Activated CD8-positive, alpha-beta memory T cell treated with anti-CD3 and anti-CD28 coated beads, Interleukin-2, amount 10 ng/mL, durations not matched to agents 7 days and 5 days (primary cell): ENCODE measurements at regions of chrX and their contacts with region 1.

Region 1: DNA sequence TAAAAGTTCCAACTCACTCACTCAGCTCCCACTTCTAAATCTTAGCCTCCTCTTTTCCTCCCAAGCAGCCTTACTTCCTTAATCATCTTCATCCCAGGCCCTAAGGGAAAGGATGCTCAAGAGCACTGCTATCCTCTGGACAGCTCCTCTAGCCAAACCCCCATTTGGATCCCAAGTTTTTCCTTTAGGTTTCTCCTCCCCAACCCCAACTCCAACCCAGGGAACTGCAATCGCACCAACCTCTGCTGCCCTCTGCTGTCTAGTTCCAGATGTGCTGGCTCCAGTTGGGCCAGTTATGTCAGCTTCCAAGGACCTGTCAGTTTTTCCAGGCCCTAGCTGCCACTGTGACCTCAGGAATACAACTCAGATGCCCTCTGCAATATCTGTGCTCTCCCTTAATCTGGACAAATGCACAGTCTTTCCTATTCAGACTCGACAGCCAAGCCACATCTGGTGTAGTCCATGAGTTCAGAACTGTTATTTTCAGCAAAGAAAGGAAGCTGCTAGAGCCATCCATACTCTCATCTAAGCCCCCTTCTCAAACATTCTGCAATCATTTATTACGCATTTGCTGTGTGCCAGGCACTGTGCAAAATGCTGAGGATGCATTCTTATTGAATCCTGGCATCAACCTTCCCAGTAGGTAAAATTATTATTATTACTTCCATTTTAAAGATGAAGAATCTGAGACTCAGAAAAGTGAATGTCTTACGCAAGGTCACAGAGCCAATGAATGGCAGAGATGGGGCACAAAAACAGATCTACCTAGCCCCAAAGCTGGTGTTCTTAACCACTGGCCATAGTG is 12.3 kb upstream of the XPNPEP2 start:
- DNase-seq: peak; percentile 52
- ATAC-seq: peak; percentile 66
- H3K4me3 Mint-ChIP-seq: no peak overlapping the region
- H3K27ac Mint-ChIP-seq: no peak overlapping the region
- H3K4me1 Mint-ChIP-seq: peaks cover 24% of the 10 kb centered on the region
- H3K27me3 Mint-ChIP-seq: no peaks in the 10 kb centered on the region

Region 2: DNA sequence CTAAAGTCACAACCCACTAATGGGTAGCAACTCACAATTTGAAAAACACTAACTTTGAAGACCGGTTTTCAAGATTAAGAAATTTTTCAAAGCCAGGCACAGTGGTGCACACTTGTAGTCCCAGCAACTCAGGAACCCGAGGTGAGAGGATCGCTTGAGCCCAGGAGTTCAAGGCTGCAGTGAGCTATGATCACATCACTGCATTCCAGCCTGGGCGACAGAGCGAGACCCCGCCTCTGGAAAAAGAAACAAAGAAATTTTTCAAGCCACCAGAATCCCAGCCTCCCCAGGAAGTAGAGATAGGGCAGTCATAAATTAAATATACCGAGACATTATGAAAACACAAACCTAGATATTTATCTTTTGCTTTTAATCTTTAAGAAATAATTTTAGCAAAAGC is 216.2 kb before region 1 on chrX:
- CTCF ChIA-PET with region 1: no interaction called
- DNase-seq: no peak
- ATAC-seq: no peak
- H3K4me3 Mint-ChIP-seq: no peak overlapping the region
- H3K27ac Mint-ChIP-seq: no peak overlapping the region
- H3K4me1 Mint-ChIP-seq: no peaks in the 10 kb centered on the region
- H3K27me3 Mint-ChIP-seq: no peaks in the 10 kb centered on the region

Region 3: GRCh38 chrX:129606918-129607317 is 119.6 kb before region 1 on chrX:
- CTCF ChIA-PET with region 1: interaction called, 11 read pairs
- DNase-seq: peak; percentile 56
- ATAC-seq: peak; percentile 45
- H3K4me3 Mint-ChIP-seq: no peak overlapping the region
- H3K27ac Mint-ChIP-seq: no peak overlapping the region
- H3K4me1 Mint-ChIP-seq: peaks cover 23% of the 10 kb centered on the region
- H3K27me3 Mint-ChIP-seq: no peaks in the 10 kb centered on the region

Region 4: DNA sequence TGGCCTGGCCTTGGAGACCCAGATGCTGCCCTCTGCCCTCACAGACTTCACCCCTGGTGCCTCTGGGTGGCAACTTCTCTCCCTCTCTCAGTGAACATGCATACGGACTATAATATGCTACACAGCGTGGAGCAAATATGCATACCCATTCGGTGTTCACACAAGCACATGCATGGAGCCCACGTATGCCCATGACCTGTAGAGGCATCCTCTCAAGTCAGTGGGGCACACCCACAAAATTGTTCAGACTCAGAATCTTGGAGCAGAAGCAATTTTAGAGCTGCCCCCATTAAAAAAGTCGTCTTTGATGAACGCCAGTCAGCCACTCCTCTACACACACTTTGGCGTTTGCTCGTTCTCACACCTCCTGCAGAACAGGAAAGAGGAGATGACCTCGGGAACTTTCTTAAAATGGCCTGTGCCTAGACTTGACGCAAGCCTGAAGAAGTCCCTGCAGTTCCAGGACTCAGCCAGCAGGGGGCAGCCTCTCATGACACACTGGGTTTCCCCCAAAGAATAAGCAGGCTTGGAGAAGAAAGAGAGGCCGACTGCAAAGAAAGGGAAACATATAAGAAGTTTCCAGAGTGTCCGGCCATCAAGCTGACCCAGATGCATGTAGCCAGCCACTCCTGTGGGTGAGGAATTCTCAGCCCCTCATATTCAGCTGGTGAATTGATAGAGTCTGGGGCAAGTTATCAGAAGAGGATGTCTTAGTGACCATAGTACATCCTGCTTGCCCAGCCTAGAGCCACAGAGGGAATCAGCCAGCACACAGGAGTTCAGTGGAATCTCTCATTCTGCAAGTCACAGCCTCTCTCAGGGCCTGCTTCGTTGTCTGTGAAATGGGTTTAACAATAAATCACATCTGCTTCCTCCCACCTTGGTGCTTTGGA is 89.0 kb before region 1 on chrX:
- CTCF ChIA-PET with region 1: interaction called, 26 read pairs
- DNase-seq: peak; percentile 77
- ATAC-seq: peak; percentile 83
- H3K4me3 Mint-ChIP-seq: no peak overlapping the region
- H3K27ac Mint-ChIP-seq: no peak overlapping the region
- H3K4me1 Mint-ChIP-seq: peaks cover 10% of the 10 kb centered on the region
- H3K27me3 Mint-ChIP-seq: no peaks in the 10 kb centered on the region

Region 5: DNA sequence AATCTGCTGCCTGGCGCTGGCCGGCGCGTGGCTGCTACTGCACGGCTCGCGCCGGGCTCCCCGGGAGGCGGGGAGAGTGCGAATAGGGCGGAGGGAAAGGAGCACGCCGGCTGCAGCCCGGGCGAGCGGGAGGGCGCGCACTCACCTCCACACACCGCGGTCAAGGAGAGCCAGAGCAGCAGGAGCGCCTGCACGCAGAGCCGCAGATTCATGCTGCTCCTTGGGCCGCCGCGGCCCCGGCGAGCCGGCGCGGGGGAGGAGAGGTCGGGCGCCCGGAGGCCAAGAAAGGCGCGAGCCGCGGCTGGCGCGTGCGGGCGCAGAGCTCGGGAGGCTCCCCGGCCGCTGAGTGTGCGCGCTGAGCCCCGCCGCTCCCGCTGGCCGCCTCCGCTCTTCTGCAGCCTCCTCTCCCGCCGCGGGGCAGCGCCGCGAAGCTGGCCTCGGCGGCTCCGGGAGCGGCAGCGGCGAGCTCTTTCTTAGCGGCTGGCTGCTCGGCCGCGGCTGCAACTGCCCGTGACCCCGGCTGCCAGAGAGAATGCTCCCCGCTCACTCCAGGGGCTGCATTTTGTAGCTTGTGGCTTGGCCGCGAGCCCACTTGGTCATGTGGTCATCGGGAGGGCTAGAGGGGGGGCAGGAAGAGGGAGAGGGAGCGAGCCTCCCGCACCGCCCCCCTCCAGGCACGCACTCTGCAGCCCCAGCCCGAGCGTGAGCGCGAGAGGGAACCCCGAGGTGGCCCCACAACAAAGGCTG is 71.9 kb before region 1 on chrX and contains the start of gene APLN:
- CTCF ChIA-PET with region 1: interaction called, 17 read pairs
- DNase-seq: no peak
- ATAC-seq: peak; percentile 71
- H3K4me3 Mint-ChIP-seq: peak within 1 kb of the TSS; percentile 56
- H3K27ac Mint-ChIP-seq: no peak within 1 kb of the TSS
- H3K4me1 Mint-ChIP-seq: peaks cover 7% of the 10 kb centered on the region
- H3K27me3 Mint-ChIP-seq: peaks cover 27% of the 10 kb centered on the region
- total RNA-seq, gene APLN: 0.14 to 0.15 TPM

Region 6: GRCh38 chrX:129754056-129755024 is 27.8 kb after region 1 on chrX:
- CTCF ChIA-PET with region 1: interaction called, 11 read pairs
- DNase-seq: no peak
- ATAC-seq: no peak
- H3K4me3 Mint-ChIP-seq: no peak overlapping the region
- H3K27ac Mint-ChIP-seq: no peak overlapping the region
- H3K4me1 Mint-ChIP-seq: peaks cover 45% of the 10 kb centered on the region
- H3K27me3 Mint-ChIP-seq: no peaks in the 10 kb centered on the region

Region 7: GRCh38 chrX:129823115-129823514 is 96.6 kb after region 1 on chrX:
- CTCF ChIA-PET with region 1: interaction called, 19 read pairs
- DNase-seq: peak; percentile 67
- ATAC-seq: peak; percentile 97
- H3K4me3 Mint-ChIP-seq: peak overlapping the region; percentile 53
- H3K27ac Mint-ChIP-seq: peak overlapping the region; percentile 91
- H3K4me1 Mint-ChIP-seq: peaks cover 17% of the 10 kb centered on the region
- H3K27me3 Mint-ChIP-seq: no peaks in the 10 kb centered on the region